ENCODE measurements at regions of chr7 and their contacts with region 1.

Region 1: GRCh38 chr7:43834463-43835251 is 34.7 kb downstream of the MRPS24 start:
- DNase-seq: no peak
- ATAC-seq: peak; percentile 55
- H3K4me3 Mint-ChIP-seq: peak overlapping the region; percentile 88
- H3K27ac Mint-ChIP-seq: peak overlapping the region; percentile 88
- H3K4me1 Mint-ChIP-seq: peaks cover 24% of the 10 kb centered on the region
- H3K27me3 Mint-ChIP-seq: peaks cover 3% of the 10 kb centered on the region
- CTCF ChIP-seq: no peak

Region 2: DNA sequence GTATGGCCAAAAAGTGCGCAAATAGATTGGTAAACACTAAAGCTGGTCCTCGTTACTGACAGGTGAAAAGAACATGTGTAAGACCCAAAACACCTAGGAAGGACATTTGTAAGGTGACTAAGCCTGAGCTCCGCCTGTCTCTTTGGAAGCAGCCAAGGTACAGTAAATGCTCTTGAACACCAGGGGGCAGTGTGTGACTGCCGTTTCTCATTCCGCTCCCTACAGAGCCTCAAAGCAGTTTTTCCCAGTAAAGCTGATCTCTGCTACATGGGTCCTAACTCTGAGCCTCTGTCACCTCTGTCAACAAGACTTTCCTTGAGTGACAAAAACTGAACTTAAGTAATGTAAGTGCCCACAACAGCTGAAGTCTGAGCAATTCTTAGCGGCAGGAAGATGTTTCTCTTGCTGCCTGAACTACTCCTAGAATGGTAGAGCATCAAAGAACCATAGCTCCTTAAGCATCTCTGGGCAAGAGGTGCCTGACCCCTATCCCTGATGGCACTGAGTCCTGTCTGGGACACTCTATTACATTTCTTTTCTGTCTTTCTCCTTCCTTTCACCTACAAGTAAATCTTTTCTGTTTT is 1893.8 kb before region 1 on chr7:
- CTCF ChIA-PET with region 1: interaction called, 5 read pairs
- POLR2A ChIA-PET with region 1: no interaction called
- intact Hi-C with region 1: loop called (anchors 1 kb)
- DNase-seq: peak; percentile 35
- ATAC-seq: peak; percentile 67
- H3K4me3 Mint-ChIP-seq: peak overlapping the region; percentile 51
- H3K27ac Mint-ChIP-seq: no peak overlapping the region
- H3K4me1 Mint-ChIP-seq: peaks cover 27% of the 10 kb centered on the region
- H3K27me3 Mint-ChIP-seq: peaks cover 5% of the 10 kb centered on the region
- CTCF ChIP-seq: no peak

Region 3: GRCh38 chr7:42272793-42273665 is 1561.6 kb before region 1 on chr7:
- CTCF ChIA-PET with region 1: no interaction called
- POLR2A ChIA-PET with region 1: no interaction called
- intact Hi-C with region 1: loop called (anchors 5 kb)
- DNase-seq: no peak
- ATAC-seq: no peak
- H3K4me3 Mint-ChIP-seq: no peak overlapping the region
- H3K27ac Mint-ChIP-seq: no peak overlapping the region
- H3K4me1 Mint-ChIP-seq: peaks cover 4% of the 10 kb centered on the region
- H3K27me3 Mint-ChIP-seq: peaks cover 7% of the 10 kb centered on the region
- CTCF ChIP-seq: no peak

Region 4: DNA sequence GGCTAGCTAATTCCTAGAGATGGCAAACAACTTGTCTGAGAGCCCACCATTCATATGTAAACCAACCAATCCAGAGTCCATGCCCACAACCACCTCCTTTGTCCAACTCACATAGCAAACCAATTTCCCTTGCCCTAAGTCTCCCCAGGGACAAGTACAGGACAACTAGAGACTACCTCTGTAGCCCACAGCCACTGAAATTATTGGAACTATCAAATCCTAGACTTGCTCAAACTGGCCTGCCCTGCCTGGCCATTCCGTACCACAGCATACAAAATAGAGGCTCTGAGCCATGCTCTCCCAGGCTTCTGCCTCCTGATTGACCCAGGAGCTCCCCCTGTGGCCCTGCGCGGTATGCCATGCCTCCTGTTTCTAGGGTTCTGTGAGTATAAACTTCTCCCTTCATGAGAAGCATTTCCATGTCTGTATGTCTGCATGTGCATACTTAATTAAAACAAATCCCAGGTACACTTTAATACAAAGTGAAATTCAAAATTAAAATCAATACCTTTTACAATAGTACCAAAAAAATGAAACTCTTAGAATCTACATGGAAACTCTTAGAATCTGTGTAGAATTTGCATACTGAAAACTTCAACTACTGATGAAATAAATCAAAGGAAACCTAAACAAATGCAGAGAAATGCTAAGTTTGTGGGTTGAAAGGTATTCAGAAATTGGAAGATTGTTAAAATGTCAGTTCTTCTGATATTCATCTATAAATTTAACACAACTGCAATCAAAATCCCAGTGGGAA is 726.2 kb before region 1 on chr7:
- CTCF ChIA-PET with region 1: interaction called, 3 read pairs
- POLR2A ChIA-PET with region 1: no interaction called
- intact Hi-C with region 1: loop called (anchors 5 kb)
- DNase-seq: peak; percentile 30
- ATAC-seq: peak; percentile 56
- H3K4me3 Mint-ChIP-seq: no peak overlapping the region
- H3K27ac Mint-ChIP-seq: no peak overlapping the region
- H3K4me1 Mint-ChIP-seq: peaks cover 2% of the 10 kb centered on the region
- H3K27me3 Mint-ChIP-seq: peaks cover 34% of the 10 kb centered on the region
- CTCF ChIP-seq: peak; percentile 59

Region 5: DNA sequence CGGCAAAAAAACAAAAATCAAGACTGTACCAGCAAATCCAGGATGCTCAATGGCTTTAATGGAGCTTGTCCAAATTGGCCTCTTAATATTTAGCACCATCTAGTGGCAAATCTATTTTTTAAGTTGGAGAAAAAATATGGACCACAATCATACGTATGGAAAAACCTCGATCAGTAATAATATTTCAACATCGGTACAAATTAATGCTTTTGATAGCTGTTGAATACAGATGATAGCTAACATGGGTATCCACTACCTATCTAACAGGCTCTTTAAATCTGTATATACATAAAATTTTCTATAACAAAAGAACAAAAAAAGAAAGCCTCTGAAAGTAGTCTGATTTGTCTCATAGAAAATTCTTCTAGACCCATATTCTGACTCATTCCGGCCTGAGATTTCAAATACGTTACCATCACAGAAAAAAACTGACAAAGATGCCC is 134.6 kb before region 1 on chr7:
- CTCF ChIA-PET with region 1: interaction called, 25 read pairs
- POLR2A ChIA-PET with region 1: interaction called, 3 read pairs
- intact Hi-C with region 1: loop called (anchors 1 kb)
- DNase-seq: no peak
- ATAC-seq: peak; percentile 84
- H3K4me3 Mint-ChIP-seq: peak overlapping the region; percentile 21
- H3K27ac Mint-ChIP-seq: peak overlapping the region; percentile 68
- H3K4me1 Mint-ChIP-seq: peaks cover 30% of the 10 kb centered on the region
- H3K27me3 Mint-ChIP-seq: no peaks in the 10 kb centered on the region
- CTCF ChIP-seq: peak; percentile 41

Region 6: GRCh38 chr7:43729214-43729923 is 105.3 kb before region 1 on chr7 and contains the start of gene COA1:
- CTCF ChIA-PET with region 1: interaction called, 5 read pairs
- POLR2A ChIA-PET with region 1: interaction called, 9 read pairs
- intact Hi-C with region 1: loop called (anchors 1 kb)
- DNase-seq: peak; percentile 75
- ATAC-seq: peak; percentile 92
- H3K4me3 Mint-ChIP-seq: peak within 1 kb of the TSS; percentile 95
- H3K27ac Mint-ChIP-seq: peak within 1 kb of the TSS; percentile 88
- H3K4me1 Mint-ChIP-seq: peaks cover 40% of the 10 kb centered on the region
- H3K27me3 Mint-ChIP-seq: no peaks in the 10 kb centered on the region
- CTCF ChIP-seq: no peak
- total RNA-seq, gene COA1: 49.2 and 56.9 TPM in 2 replicates

Region 7: GRCh38 chr7:43850348-43851116 is 15.9 kb after region 1 on chr7:
- CTCF ChIA-PET with region 1: no interaction called
- POLR2A ChIA-PET with region 1: no interaction called
- intact Hi-C with region 1: no loop called
- DNase-seq: no peak
- ATAC-seq: no peak
- H3K4me3 Mint-ChIP-seq: no peak overlapping the region
- H3K27ac Mint-ChIP-seq: no peak overlapping the region
- H3K4me1 Mint-ChIP-seq: no peaks in the 10 kb centered on the region
- H3K27me3 Mint-ChIP-seq: no peaks in the 10 kb centered on the region
- CTCF ChIP-seq: no peak

Region 8: DNA sequence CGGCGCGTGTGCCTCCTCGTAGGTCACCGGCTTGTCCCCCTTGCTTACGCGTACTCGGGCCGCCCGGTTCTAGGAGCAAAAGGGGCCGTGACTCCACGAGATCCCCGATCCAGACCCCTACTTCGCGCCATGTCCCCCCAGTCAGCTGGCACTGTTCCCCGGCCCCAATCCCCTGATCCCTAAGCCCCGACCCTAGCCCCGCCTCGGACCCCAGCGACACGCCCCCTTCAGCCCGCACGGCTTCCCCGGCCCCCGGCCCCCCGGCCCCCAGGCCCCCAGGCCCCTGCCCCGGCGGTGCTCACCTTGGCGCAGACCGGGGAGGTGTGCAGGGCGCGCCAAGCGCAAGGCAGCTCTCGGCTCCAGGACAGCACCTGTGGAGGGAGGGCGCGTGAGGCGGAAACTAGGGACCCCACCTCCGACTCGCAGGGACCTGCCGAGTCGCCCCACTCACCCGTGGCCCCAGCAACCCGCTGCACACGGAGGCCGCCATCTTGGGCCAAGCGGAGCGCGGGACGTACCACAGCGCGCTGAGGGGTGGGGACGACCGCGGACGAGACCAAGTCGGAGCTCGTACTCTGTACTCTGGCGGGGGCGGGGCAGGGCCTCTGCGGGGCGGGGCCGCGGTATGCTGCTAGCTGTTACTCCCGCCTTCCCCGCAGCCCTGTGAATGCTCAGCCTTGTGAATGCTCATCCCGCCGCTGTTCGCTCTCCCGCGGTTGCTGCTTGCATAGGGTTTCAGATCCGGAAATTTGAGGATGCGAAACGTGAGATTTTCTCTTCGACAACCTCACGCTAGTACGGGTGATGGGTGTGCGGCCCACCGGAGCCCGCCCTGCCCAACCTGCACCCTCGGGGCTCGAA is 34.6 kb after region 1 on chr7 and contains the start of gene MRPS24:
- CTCF ChIA-PET with region 1: no interaction called
- POLR2A ChIA-PET with region 1: interaction called, 5 read pairs
- intact Hi-C with region 1: loop called (anchors 2 kb)
- DNase-seq: peak; percentile 85
- ATAC-seq: peak; percentile 98
- H3K4me3 Mint-ChIP-seq: peak within 1 kb of the TSS; percentile 93
- H3K27ac Mint-ChIP-seq: peak within 1 kb of the TSS; percentile 89
- H3K4me1 Mint-ChIP-seq: peaks cover 21% of the 10 kb centered on the region
- H3K27me3 Mint-ChIP-seq: no peaks in the 10 kb centered on the region
- CTCF ChIP-seq: no peak
- total RNA-seq, gene MRPS24: 73.1 and 78.1 TPM in 2 replicates

Measured in activated B cell treated with CpG ODN at 0.5 μM for 24 hours (primary cell).